Activated naive CD4-positive, alpha-beta T cell treated with anti-CD3 and anti-CD28 coated beads for 36 hours (primary cell): ENCODE measurements at regions of chr1 and their contacts with region 1.

Region 1: GRCh38 chr1:185491604-185492003 is 174.6 kb upstream of the IVNS1ABP start:
- DNase-seq: no peak
- H3K4me3 Mint-ChIP-seq: no peak overlapping the region
- H3K27ac Mint-ChIP-seq: no peak overlapping the region
- H3K4me1 Mint-ChIP-seq: no peaks in the 10 kb centered on the region
- H3K27me3 Mint-ChIP-seq: no peaks in the 10 kb centered on the region

Region 2: DNA sequence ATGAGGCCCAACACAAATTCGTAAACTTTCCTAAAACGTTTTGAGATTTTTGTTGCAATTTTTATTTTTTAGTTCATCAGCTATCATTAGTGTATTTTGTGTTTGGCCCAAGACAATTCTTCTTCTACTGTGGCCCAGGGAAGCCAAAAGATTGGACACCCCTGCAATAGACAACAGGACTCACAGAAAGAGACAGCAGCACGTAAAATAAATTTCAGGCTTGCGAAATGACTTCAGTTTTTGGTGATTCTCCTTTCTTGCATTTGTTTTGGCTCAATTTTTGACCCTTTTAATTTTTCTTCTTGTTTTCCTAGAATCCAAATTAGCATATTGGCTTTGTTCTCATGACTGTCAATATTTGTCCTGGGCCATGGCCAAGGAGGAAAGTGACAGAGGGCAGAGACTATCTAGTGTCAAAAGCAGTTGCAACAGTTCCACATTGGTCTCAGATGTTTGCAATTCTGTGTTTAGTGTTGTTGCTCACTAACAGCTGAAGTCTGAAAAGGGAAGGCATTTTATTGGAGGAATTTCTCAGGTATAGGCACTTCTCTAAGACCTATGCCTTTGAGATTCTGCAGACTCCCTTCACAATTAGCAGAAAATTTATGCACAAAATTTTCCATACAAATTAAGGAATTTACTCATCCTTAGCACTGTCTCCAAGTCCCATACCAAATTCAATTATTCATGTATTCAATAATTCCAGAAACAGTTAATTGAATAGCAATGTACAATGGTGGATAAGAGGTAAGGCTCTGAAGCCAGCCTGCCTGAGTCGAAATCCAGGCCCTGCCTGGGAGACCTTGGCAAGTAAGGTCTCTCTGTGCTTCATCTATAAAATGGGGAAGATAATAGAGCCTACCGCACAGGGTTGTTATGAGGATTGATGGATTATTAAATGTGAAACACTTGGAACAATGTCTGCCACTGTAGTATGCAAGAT is 13.7 kb before region 1 on chr1:
- CTCF ChIA-PET with region 1: interaction called, 3 read pairs
- intact Hi-C with region 1: loop called (anchors 2 kb)
- DNase-seq: no peak
- H3K4me3 Mint-ChIP-seq: no peak overlapping the region
- H3K27ac Mint-ChIP-seq: no peak overlapping the region
- H3K4me1 Mint-ChIP-seq: peaks cover 5% of the 10 kb centered on the region
- H3K27me3 Mint-ChIP-seq: no peaks in the 10 kb centered on the region